Activated CD4-positive, alpha-beta T cell treated with anti-CD3 and anti-CD28 coated beads, Interleukin-2, amount 10 ng/mL, durations not matched to agents 24 days and 14 days (primary cell): ENCODE measurements at regions of chr12 and their contacts with region 1.

Region 1: DNA sequence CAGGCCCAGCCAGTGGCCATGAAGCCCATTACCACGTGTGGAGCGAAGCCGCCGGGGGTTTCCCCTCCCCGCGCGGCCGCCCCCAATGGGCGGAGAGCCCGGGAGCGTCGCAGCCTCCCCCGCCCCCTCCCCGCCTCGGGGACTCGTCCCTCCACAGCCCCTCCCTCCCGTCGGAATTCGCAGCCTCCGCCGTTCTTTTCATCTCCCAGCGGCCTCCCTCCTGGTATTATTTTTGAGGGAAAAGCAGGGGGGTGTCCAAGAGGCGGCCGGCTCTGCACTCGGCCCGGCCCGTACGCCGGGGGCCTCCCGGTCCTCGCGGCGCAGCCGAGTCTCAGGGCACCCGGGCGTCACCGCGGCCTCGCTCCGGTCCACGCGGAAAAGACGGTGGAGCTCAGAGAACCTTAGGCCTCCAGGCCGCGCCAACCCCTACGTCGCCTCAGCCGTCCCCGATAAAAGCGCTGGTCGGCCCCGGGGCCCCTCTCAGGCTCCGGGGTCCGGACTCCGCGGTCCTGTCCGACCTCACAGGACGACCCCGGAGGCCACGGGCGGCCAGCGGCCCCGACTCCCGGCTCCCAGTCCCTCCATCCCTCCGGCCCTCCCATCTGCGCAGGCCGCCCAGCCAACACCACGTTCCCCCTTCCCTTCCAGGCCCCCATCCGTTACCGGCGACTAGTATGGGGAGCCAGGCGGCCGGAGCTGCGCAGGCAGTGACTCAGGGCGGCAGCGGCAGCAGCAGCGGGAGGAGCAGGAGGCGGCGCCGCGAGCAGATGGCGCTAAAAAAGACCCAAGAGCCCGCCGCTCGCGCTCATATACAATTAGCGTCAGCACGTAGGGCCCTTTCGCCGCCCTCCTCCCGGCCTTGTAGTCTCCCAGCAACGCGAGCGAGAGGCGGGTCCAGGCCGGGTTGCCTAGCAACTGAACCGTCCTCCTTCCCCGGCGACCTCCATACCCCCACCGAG is at the start of gene NAP1L1:
- DNase-seq: peak; percentile 99
- H3K4me3 Mint-ChIP-seq: peak within 1 kb of the TSS; percentile 100
- H3K27ac Mint-ChIP-seq: peak within 1 kb of the TSS; percentile 100
- H3K4me1 Mint-ChIP-seq: peaks cover 42% of the 10 kb centered on the region
- H3K27me3 Mint-ChIP-seq: no peaks in the 10 kb centered on the region
- total RNA-seq, gene NAP1L1: 652 and 689 TPM in 2 replicates

Region 2: DNA sequence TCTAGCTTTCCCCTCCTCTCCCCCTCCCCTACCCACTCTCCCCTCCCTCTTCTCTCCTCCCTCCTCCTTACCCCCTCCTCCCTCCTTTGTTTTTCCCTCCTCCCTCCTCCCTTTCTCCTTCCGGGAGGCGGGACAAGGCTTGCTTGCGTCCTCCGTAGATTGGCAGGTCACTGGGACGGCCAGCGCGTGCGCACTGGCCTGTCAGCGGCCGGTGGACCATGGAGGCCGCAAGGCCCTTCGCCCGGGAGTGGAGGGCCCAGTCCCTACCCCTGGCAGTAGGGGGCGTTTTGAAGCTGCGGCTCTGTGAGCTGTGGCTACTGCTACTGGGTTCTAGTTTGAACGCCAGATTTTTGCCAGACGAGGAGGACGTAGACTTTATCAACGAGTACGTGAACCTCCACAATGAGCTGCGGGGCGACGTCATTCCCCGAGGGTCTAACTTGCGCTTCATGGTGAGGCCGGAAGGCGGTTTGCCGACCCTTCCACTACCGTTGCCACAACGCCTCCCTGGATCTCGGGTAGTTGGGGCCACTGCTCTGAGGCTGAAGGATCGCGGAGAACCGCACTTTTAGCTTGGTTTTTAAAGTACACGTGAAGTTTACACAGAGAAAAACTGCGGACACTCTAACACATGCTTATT is 693.2 kb before region 1 on chr12 and contains the start of gene GLIPR1L2:
- intact Hi-C with region 1: loop called (anchors 5 kb)
- DNase-seq: peak; percentile 95
- H3K4me3 Mint-ChIP-seq: peak within 1 kb of the TSS; percentile 94
- H3K27ac Mint-ChIP-seq: peak within 1 kb of the TSS; percentile 92
- H3K4me1 Mint-ChIP-seq: peaks cover 27% of the 10 kb centered on the region
- H3K27me3 Mint-ChIP-seq: peaks cover 3% of the 10 kb centered on the region
- total RNA-seq, gene GLIPR1L2: 0.36 TPM in 1 of 2 replicates, not detected in the other

Region 3: GRCh38 chr12:75939016-75939642 is 145.1 kb before region 1 on chr12:
- intact Hi-C with region 1: loop called (anchors 5 kb)
- DNase-seq: peak; percentile 70
- H3K4me3 Mint-ChIP-seq: no peak overlapping the region
- H3K27ac Mint-ChIP-seq: no peak overlapping the region
- H3K4me1 Mint-ChIP-seq: peaks cover 21% of the 10 kb centered on the region
- H3K27me3 Mint-ChIP-seq: no peaks in the 10 kb centered on the region

Region 4: DNA sequence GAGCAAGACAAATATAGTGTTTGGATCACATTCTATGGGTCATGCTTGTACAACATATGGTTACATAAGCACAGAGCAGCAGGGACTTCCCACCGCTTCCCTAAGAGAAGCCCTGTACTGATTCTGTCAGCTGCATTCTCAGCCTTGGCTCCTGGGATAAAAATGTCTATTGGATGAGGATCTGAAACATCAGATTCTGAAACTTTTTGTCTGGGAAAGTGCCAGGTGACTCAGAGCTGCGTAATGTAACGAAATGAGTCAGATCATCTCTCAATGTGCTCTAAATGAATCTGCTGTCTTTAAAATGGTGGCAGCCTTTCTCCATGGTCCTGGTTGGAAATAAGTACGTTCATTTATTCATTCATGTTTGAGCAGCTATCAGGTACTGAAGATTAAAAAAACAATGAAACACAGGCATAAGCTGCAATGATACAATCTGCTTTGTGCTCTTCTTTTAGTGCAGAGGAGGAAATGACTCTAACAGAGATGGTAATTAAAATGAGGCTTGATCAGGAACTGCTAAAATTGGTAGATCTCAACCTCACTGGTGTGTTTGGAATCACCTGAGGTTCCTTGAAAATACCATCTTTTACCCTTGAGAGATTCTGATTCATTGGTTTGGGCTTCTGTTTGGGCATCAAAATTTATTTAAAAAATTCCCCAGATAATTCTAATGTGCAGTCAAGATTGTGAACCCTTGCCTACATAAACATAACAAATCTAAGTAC is 99.4 kb after region 1 on chr12:
- intact Hi-C with region 1: loop called (anchors 1 kb)
- DNase-seq: peak; percentile 62
- H3K4me3 Mint-ChIP-seq: no peak overlapping the region
- H3K27ac Mint-ChIP-seq: peak overlapping the region; percentile 61
- H3K4me1 Mint-ChIP-seq: peaks cover 7% of the 10 kb centered on the region
- H3K27me3 Mint-ChIP-seq: peaks cover 45% of the 10 kb centered on the region

Region 5: DNA sequence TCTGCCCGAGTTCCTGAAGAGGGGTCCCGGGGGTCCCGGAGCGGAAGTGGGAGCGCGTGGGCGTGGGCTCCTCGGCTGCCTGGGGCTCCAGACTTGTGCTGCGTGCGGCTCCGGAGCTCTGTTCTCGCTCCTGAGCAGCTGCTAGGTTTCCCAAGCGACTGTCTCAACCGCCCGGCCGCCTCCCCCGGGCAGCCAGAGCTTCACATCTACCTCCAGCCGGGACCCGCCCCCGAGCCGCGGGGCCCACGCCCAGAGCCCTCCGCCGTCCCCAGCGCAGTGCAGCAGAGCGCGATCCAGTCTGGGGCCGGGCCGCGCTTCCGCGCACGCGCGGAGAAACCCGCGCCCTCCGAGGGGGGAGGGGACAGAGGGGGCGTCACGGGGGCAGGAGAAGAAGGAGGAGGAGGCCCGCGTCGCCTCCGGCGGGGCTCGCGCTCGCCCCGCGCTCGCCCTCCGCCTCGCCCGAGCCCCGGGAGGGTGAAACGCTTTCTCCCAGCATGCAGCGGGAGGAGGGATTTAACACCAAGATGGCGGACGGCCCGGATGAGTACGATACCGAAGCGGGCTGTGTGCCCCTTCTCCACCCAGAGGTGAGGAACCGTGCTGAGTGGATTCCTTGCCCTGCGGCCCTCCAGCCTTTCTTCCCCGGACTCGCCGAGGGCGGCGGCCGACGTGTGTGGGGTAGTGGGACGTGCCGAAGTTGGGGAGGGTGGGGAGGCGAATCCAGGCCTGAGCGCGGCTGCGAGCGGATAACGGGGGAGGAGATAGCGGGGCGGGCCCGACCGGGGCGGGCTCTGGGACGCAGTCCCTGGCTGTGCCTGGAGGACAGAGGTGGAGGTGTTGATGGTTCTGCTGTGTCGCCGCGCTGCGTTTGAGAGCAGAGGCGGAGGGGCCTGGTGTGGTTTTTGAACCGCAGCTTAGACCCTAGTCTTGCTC is 679.8 kb after region 1 on chr12 and contains the start of gene ZDHHC17:
- intact Hi-C with region 1: loop called (anchors 2 kb)
- DNase-seq: peak; percentile 98
- H3K4me3 Mint-ChIP-seq: peak within 1 kb of the TSS; percentile 93
- H3K27ac Mint-ChIP-seq: peak within 1 kb of the TSS; percentile 95
- H3K4me1 Mint-ChIP-seq: peaks cover 16% of the 10 kb centered on the region
- H3K27me3 Mint-ChIP-seq: peaks cover 11% of the 10 kb centered on the region
- total RNA-seq, gene ZDHHC17: 24.6 and 31.2 TPM in 2 replicates